A549 (cell line): ENCODE measurements at regions of chr20 and their contacts with region 1.

Region 1: GRCh38 chr20:774016-774659 is 5.8 kb upstream of the SLC52A3 start:
- DNase-seq: no peak
- ATAC-seq: no peak; a peak in 1 of 6 replicates
- H3K4me3 ChIP-seq: no peak overlapping the region
- H3K27ac ChIP-seq: no peak overlapping the region
- H3K4me1 ChIP-seq: 0 out of 3 replicates have a peak, but pooled peaks cover 5% of the 10 kb centered on the region
- CTCF ChIP-seq: no peak
- EP300 ChIP-seq: no peak
- POLR2A ChIP-seq: no peak
- RAD21 ChIP-seq: no peak

Region 2: DNA sequence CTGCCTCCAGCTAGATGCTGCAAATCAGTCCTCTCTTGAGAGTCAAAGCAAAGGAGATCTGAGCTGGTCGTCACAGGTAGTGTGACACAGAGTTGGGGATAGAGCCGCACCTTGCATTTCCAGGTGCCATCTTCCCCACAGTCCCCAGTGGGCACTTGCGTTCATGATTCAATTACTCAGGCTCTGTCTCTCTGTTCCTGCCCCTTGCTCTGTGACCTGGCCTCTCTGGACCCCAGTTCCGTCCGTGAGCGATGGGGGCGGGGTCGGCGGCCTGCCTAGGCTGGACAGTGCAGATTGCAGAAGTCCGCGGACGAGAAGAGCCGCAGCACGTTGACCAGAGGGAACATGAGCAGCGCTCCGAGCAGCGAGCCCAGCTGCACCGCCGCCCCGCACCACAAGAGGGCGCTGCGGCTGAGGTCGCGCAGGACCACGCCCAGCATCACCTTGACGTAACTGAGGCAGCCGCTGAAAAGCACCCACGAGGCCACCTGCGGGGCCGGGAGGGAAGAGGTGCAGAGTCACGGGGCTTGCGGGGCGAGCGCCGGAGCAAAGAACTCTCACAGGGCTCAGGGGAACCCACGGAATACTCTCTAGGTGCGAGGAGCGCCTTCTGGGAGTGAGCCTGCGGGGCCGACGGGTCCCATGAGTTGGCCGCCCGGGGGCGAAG is 13.3 kb before region 1 on chr20:
- CTCF ChIA-PET with region 1: interaction called, 18 read pairs
- POLR2A ChIA-PET with region 1: no interaction called
- DNase-seq: peak; percentile 47 to 65
- ATAC-seq: peak; percentile 40 to 91; a peak in 3 of 6 replicates
- H3K4me3 ChIP-seq: no peak overlapping the region
- H3K27ac ChIP-seq: no peak overlapping the region
- H3K4me1 ChIP-seq: no peaks in the 10 kb centered on the region
- CTCF ChIP-seq: peak; percentile 64
- EP300 ChIP-seq: no peak
- POLR2A ChIP-seq: no peak
- RAD21 ChIP-seq: 0 out of 5 replicates have a peak, but pooled peaks of 1 of the 2 experiments have one; percentile 15

Region 3: GRCh38 chr20:796921-797320 is 22.8 kb after region 1 on chr20:
- CTCF ChIA-PET with region 1: no interaction called
- POLR2A ChIA-PET with region 1: no interaction called
- DNase-seq: no peak
- ATAC-seq: no peak
- H3K4me3 ChIP-seq: no peak overlapping the region
- H3K27ac ChIP-seq: no peak overlapping the region
- H3K4me1 ChIP-seq: no peaks in the 10 kb centered on the region
- CTCF ChIP-seq: no peak
- EP300 ChIP-seq: no peak
- POLR2A ChIP-seq: no peak
- RAD21 ChIP-seq: no peak

Region 4: GRCh38 chr20:872855-873521 is 98.8 kb after region 1 on chr20:
- CTCF ChIA-PET with region 1: no interaction called
- POLR2A ChIA-PET with region 1: no interaction called
- DNase-seq: no peak
- ATAC-seq: peak in 1 of 2 experiments; percentile 12; a peak in 2 of 6 replicates
- H3K4me3 ChIP-seq: no peak overlapping the region
- H3K27ac ChIP-seq: no peak overlapping the region
- H3K4me1 ChIP-seq: no peaks in the 10 kb centered on the region
- CTCF ChIP-seq: no peak; the same call in 2 of the 3 replicates
- EP300 ChIP-seq: no peak
- POLR2A ChIP-seq: no peak
- RAD21 ChIP-seq: no peak